CD8-positive, alpha-beta T cell (primary cell): ENCODE measurements at regions of chr15 and their contacts with region 1.

Region 1: GRCh38 chr15:44663409-44664308 is at the start of gene SPG11:
- DNase-seq: peak; percentile 90 to 98 (median 96)
- ATAC-seq: peak; percentile 76
- H3K4me3 ChIP-seq: peak within 1 kb of the TSS; percentile 52 to 80
- H3K4me3 Mint-ChIP-seq: peak within 1 kb of the TSS; percentile 99
- H3K27ac ChIP-seq: peak within 1 kb of the TSS; percentile 82 to 96
- H3K27ac Mint-ChIP-seq: peak within 1 kb of the TSS; percentile 96
- H3K4me1 ChIP-seq: peaks cover 57% of the 10 kb centered on the region
- H3K4me1 Mint-ChIP-seq: peaks cover 68% of the 10 kb centered on the region
- H3K27me3 ChIP-seq: no peaks in the 10 kb centered on the region
- H3K27me3 Mint-ChIP-seq: no peaks in the 10 kb centered on the region
- CTCF ChIP-seq: peak; percentile 89
- total RNA-seq, gene SPG11: 41.9 to 42.4 TPM

Region 2: DNA sequence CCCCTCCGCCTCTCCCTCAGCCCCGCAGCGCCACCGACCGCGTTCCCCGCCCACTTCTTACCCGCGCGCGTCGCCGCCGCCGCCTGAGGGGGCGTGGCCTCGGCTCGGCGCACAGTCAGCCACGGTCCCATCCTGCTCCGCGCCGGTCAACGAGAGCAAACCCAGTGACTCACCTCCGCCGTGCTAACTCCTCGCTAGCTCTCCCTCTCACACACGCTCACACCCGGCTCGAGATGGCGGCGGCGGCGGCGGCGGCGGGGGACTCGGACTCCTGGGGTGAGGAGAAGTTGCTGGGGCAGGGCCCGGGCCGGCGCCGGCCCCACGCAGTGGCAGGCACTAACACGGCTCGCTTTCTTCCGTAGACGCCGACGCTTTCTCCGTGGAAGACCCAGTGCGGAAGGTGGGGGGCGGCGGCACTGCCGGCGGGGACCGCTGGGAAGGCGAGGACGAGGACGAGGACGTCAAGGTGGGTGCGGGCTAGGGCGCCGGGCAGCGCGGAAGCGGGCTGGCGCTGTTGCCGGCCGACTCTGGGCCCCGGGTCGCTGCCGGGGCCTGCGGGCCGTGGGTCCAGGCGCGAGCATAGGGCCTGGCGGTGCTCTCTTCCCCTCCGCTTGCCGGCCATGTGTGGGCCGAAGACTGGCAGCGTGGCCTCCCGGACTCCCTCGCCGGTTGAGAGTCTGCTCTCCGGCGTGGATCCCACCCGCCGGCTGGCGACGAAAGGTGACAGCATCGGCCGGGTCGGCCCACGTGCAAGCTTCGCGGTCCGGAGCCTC is 126.5 kb before region 1 on chr15 and contains the start of gene EIF3J:
- CTCF ChIA-PET with region 1: no interaction called
- POLR2A ChIA-PET with region 1: interaction called, 12 read pairs
- intact Hi-C with region 1: loop called in 1 of 2 experiments (anchors 5 kb)
- DNase-seq: peak; percentile 88 to 99 (median 95)
- ATAC-seq: peak; percentile 88
- H3K4me3 ChIP-seq: peak within 1 kb of the TSS; percentile 83 to 98
- H3K4me3 Mint-ChIP-seq: peak within 1 kb of the TSS; percentile 95
- H3K27ac ChIP-seq: peak within 1 kb of the TSS; percentile 85 to 92
- H3K27ac Mint-ChIP-seq: peak within 1 kb of the TSS; percentile 96
- H3K4me1 ChIP-seq: peaks cover 42% of the 10 kb centered on the region
- H3K4me1 Mint-ChIP-seq: peaks cover 54% of the 10 kb centered on the region
- H3K27me3 ChIP-seq: no peaks in the 10 kb centered on the region
- H3K27me3 Mint-ChIP-seq: no peaks in the 10 kb centered on the region
- CTCF ChIP-seq: no peak
- total RNA-seq, gene EIF3J: 63.7 to 68.9 TPM

Region 3: DNA sequence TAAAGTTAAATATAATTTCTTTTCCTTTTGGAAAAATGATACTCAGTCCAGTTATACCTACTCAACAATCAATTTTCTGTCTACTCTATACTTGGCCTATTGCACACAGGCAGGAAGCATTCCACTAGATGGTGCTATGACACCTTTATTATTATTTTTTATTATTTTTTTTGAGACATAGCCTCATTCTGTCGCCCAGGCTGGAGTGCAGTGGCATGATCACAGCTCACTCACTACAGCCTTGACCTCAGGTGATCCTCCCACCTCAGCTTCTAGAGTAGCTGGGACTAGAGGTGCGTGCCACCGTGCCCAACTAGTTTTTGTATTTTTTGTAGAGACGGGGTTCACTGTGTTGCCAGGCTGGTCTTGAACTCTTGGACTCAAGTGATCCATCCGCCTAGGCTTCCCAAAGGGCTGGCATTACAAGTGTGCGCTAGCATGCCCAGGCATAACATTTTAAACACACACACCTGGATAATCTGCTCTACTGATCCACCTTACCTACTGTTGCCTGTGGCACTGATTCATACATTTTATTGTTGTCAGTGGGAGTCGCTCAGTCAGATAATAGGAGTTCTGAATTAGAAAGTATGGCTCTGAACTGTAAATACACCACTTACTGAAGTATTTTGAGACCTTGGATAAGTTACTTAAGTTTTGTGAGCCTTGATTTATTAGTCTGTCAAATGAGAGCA is 70.5 kb before region 1 on chr15:
- CTCF ChIA-PET with region 1: interaction called, 5 read pairs
- POLR2A ChIA-PET with region 1: interaction called, 3 read pairs
- intact Hi-C with region 1: loop called (anchors 2 to 5 kb)
- DNase-seq: peak in 4 of 9 experiments; percentile 12 to 70 (median 53)
- ATAC-seq: peak; percentile 73
- H3K4me3 ChIP-seq: no peak overlapping the region
- H3K4me3 Mint-ChIP-seq: no peak overlapping the region
- H3K27ac ChIP-seq: no peak overlapping the region
- H3K27ac Mint-ChIP-seq: peak overlapping the region; percentile 57
- H3K4me1 ChIP-seq: peaks cover 5% of the 10 kb centered on the region
- H3K4me1 Mint-ChIP-seq: peaks cover 9% of the 10 kb centered on the region
- H3K27me3 ChIP-seq: no peaks in the 10 kb centered on the region
- H3K27me3 Mint-ChIP-seq: no peaks in the 10 kb centered on the region
- CTCF ChIP-seq: peak; percentile 75

Region 4: DNA sequence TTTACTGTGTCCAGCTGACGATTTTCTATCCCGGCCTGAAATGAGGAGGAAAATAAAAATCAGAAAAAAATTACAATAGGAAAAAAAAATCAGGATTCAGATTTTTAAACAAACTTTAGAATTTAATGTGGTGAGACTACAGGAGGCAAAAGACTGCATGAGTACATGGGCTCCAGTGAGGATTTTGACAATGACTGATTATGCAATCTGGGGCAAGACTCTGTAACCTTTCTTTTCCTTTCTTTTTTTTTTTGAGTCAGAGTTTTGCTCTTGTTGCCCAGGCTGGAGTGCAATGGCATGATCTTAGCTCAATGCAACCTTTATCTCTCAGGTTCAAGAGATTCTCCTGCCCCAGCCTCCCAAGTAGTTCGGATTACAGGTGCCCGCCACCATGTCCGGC is 30.1 kb before region 1 on chr15:
- CTCF ChIA-PET with region 1: interaction called, 4 read pairs
- POLR2A ChIA-PET with region 1: interaction called, 9 read pairs
- intact Hi-C with region 1: loop called in 1 of 2 experiments (anchors 5 kb)
- DNase-seq: no peak
- ATAC-seq: no peak
- H3K4me3 ChIP-seq: no peak overlapping the region
- H3K4me3 Mint-ChIP-seq: no peak overlapping the region
- H3K27ac ChIP-seq: no peak overlapping the region
- H3K27ac Mint-ChIP-seq: no peak overlapping the region
- H3K4me1 ChIP-seq: no peaks in the 10 kb centered on the region
- H3K4me1 Mint-ChIP-seq: peaks cover 8% of the 10 kb centered on the region
- H3K27me3 ChIP-seq: no peaks in the 10 kb centered on the region
- H3K27me3 Mint-ChIP-seq: no peaks in the 10 kb centered on the region
- CTCF ChIP-seq: no peak

Region 5: DNA sequence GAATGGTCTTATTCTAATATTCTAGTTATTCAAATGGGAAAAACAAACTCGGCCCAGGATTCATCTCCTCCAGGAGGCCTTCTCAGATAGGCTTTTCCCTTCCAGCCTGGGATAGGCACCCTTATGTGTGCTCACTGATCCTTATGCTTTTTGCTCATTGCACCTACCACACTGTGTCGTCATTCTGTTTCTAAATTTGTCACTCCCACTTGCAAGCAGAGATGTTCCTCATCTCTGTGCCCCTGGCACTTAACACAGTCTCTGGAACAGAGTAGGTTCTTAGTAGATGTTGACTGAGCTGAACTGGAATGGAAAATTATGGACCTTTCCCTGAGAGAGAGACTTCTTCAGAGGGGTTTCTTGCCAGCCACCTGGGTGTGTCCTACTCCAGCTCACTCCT is 18.6 kb after region 1 on chr15:
- CTCF ChIA-PET with region 1: interaction called, 33 read pairs
- POLR2A ChIA-PET with region 1: interaction called, 174 read pairs
- intact Hi-C with region 1: loop called in 1 of 2 experiments (anchors 1 kb)
- DNase-seq: no peak
- ATAC-seq: no peak
- H3K4me3 ChIP-seq: peak overlapping the region in 1 of 2 experiments; percentile 27
- H3K4me3 Mint-ChIP-seq: peak overlapping the region; percentile 61
- H3K27ac ChIP-seq: peak overlapping the region in 1 of 2 experiments; percentile 77
- H3K27ac Mint-ChIP-seq: peak overlapping the region; percentile 88
- H3K4me1 ChIP-seq: peaks cover 75% of the 10 kb centered on the region
- H3K4me1 Mint-ChIP-seq: peaks cover 89% of the 10 kb centered on the region
- H3K27me3 ChIP-seq: no peaks in the 10 kb centered on the region
- H3K27me3 Mint-ChIP-seq: no peaks in the 10 kb centered on the region
- CTCF ChIP-seq: no peak

Region 6: DNA sequence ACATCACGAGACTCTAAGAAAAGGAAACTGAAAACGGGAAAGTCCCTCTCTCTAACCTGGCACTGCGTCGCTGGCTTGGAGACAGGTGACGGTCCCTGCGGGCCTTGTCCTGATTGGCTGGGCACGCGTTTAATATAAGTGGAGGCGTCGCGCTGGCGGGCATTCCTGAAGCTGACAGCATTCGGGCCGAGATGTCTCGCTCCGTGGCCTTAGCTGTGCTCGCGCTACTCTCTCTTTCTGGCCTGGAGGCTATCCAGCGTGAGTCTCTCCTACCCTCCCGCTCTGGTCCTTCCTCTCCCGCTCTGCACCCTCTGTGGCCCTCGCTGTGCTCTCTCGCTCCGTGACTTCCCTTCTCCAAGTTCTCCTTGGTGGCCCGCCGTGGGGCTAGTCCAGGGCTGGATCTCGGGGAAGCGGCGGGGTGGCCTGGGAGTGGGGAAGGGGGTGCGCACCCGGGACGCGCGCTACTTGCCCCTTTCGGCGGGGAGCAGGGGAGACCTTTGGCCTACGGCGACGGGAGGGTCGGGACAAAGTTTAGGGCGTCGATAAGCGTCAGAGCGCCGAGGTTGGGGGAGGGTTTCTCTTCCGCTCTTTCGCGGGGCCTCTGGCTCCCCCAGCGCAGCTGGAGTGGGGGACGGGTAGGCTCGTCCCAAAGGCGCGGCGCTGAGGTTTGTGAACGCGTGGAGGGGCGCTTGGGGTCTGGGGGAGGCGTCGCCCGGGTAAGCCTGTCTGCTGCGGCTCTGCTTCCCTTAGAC is 47.9 kb after region 1 on chr15 and contains the start of gene B2M:
- CTCF ChIA-PET with region 1: interaction called, 282 read pairs
- POLR2A ChIA-PET with region 1: interaction called, 1,993 read pairs
- intact Hi-C with region 1: loop called (anchors 1 kb)
- DNase-seq: peak; percentile 92 to 99 (median 95)
- ATAC-seq: peak; percentile 78
- H3K4me3 ChIP-seq: peak within 1 kb of the TSS; percentile 90 to 99
- H3K4me3 Mint-ChIP-seq: peak within 1 kb of the TSS; percentile 100
- H3K27ac ChIP-seq: peak within 1 kb of the TSS; percentile 97 to 98
- H3K27ac Mint-ChIP-seq: peak within 1 kb of the TSS; percentile 100
- H3K4me1 ChIP-seq: peaks cover 35% of the 10 kb centered on the region
- H3K4me1 Mint-ChIP-seq: peaks cover 54% of the 10 kb centered on the region
- H3K27me3 ChIP-seq: no peaks in the 10 kb centered on the region
- H3K27me3 Mint-ChIP-seq: no peaks in the 10 kb centered on the region
- CTCF ChIP-seq: no peak
- total RNA-seq, gene B2M: 4,250 to 4,545 TPM

Region 7: GRCh38 chr15:44738340-44738984 is 74.8 kb after region 1 on chr15:
- CTCF ChIA-PET with region 1: interaction called, 132 read pairs
- POLR2A ChIA-PET with region 1: interaction called, 1,993 read pairs
- intact Hi-C with region 1: loop called (anchors 1 kb)
- DNase-seq: peak in 2 of 9 experiments; percentile 69 to 78
- ATAC-seq: no peak
- H3K4me3 ChIP-seq: no peak overlapping the region
- H3K4me3 Mint-ChIP-seq: peak overlapping the region; percentile 15
- H3K27ac ChIP-seq: peak overlapping the region in 1 of 2 experiments; percentile 91
- H3K27ac Mint-ChIP-seq: peak overlapping the region; percentile 78
- H3K4me1 ChIP-seq: peaks cover 50% of the 10 kb centered on the region
- H3K4me1 Mint-ChIP-seq: peaks cover 57% of the 10 kb centered on the region
- H3K27me3 ChIP-seq: no peaks in the 10 kb centered on the region
- H3K27me3 Mint-ChIP-seq: no peaks in the 10 kb centered on the region
- CTCF ChIP-seq: peak; percentile 78